Esophagus muscularis mucosa (tissue), 4 donors: ENCODE measurements at regions of chr1 and their contacts with region 1.

Region 1: GRCh38 chr1:172429331-172430127 is 9.0 kb downstream of the C1orf105 start:
- DNase-seq: no peak
- H3K4me3 ChIP-seq: no peak overlapping the region
- H3K27ac ChIP-seq: no peak overlapping the region
- H3K4me1 ChIP-seq: peaks cover 0 to 4% (median 0%) of the 10 kb centered on the region in 4 donors
- H3K27me3 ChIP-seq: no peaks in the 10 kb centered on the region
- CTCF ChIP-seq: peak; percentile 47 to 59 (median 58)
- EP300 ChIP-seq: no peak
- POLR2A ChIP-seq: no peak

Region 2: GRCh38 chr1:172002725-172003345 is 426.7 kb before region 1 on chr1:
- intact Hi-C with region 1: loop called (anchors 5 kb)
- DNase-seq: no peak
- H3K4me3 ChIP-seq: no peak overlapping the region
- H3K27ac ChIP-seq: no peak overlapping the region
- H3K4me1 ChIP-seq: peaks cover 0 to 2% (median 0%) of the 10 kb centered on the region in 4 donors
- H3K27me3 ChIP-seq: no peaks in the 10 kb centered on the region
- CTCF ChIP-seq: peak; percentile 57 to 76 (median 69)
- EP300 ChIP-seq: no peak
- POLR2A ChIP-seq: no peak

Region 3: GRCh38 chr1:172338295-172338735 is 91.2 kb before region 1 on chr1:
- intact Hi-C with region 1: no loop called
- DNase-seq: no peak
- H3K4me3 ChIP-seq: no peak overlapping the region
- H3K27ac ChIP-seq: no peak overlapping the region
- H3K4me1 ChIP-seq: peaks cover 0 to 7% (median 4%) of the 10 kb centered on the region in 4 donors
- H3K27me3 ChIP-seq: no peaks in the 10 kb centered on the region
- CTCF ChIP-seq: no peak
- EP300 ChIP-seq: no peak
- POLR2A ChIP-seq: no peak